ENCODE measurements at regions of chr6 and their contacts with region 1.

Region 1: GRCh38 chr6:154267508-154268106 is 89.0 kb downstream of the IPCEF1 start:
- DNase-seq: peak in 4 of 9 donors; percentile 28 to 48 (median 42)
- ATAC-seq: peak; percentile 38
- H3K4me3 ChIP-seq: no peak overlapping the region
- H3K4me3 Mint-ChIP-seq: peak overlapping the region; percentile 6 to 85 (median 68)
- H3K27ac ChIP-seq: no peak overlapping the region
- H3K27ac Mint-ChIP-seq: peak overlapping the region in 8 of 9 donors; percentile 65 to 92 (median 84)
- H3K4me1 ChIP-seq: peaks cover 0 to 11% of the 10 kb centered on the region in 2 donors
- H3K4me1 Mint-ChIP-seq: peaks cover 14 to 45% (median 33%) of the 10 kb centered on the region in 7 donors
- H3K27me3 ChIP-seq: no peaks in the 10 kb centered on the region
- H3K27me3 Mint-ChIP-seq: peaks cover 0 to 9% (median 0%) of the 10 kb centered on the region in 5 donors

Region 2: DNA sequence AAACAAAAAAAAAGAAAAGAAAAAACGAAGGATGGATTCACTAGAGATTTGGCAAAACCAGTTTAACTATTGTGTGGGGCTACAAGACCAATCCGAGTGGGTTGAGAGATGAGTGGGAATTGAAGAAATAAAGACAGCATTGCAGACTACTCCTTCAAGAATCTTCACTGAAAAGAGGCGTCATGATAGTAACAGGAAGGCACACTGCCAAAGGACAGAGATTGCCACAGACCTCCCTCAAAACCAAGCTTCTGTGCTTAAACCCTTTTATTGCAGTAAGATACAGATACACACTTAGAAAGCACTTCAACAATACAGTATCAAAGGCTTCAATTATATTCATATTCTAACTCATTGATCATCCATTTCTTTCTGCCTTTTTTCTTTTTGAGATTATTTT is 14.9 kb before region 1 on chr6:
- CTCF ChIA-PET with region 1: interaction called, 3 read pairs
- POLR2A ChIA-PET with region 1: interaction called, 49 read pairs
- intact Hi-C with region 1: loop called (anchors 1 to 2 kb)
- DNase-seq: peak in 2 of 9 donors; percentile 38
- ATAC-seq: no peak
- H3K4me3 ChIP-seq: no peak overlapping the region
- H3K4me3 Mint-ChIP-seq: peak overlapping the region in 9 of 10 donors; percentile 35 to 87 (median 69)
- H3K27ac ChIP-seq: peak overlapping the region; percentile 22
- H3K27ac Mint-ChIP-seq: peak overlapping the region in 8 of 9 donors; percentile 90 to 98 (median 96)
- H3K4me1 ChIP-seq: peaks cover 35 to 51% of the 10 kb centered on the region in 2 donors
- H3K4me1 Mint-ChIP-seq: peaks cover 49 to 93% (median 83%) of the 10 kb centered on the region in 7 donors
- H3K27me3 ChIP-seq: no peaks in the 10 kb centered on the region
- H3K27me3 Mint-ChIP-seq: peaks cover 0 to 27% (median 0%) of the 10 kb centered on the region in 5 donors

Region 3: DNA sequence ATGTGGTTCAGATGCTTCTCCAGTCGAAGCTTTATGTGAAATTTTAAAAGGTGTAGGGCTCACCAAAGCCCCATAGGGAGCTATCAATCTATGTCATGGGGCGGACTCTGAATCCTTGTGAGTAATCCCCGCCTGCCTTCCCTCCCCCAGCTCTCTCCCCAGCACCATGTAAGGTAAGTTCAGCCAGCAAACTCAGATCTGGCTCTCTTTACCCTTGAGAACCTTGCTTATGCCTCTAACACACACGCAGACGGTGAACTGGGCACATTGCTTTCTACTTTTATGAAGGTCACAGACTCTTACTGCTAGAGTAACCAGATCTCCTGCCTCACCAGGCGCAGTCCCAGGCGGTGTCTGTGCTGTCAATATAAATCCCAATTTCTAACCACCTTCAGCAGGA is 325.5 kb after region 1 on chr6:
- CTCF ChIA-PET with region 1: no interaction called
- POLR2A ChIA-PET with region 1: no interaction called
- intact Hi-C with region 1: no loop called
- DNase-seq: no peak
- ATAC-seq: no peak
- H3K4me3 ChIP-seq: no peak overlapping the region
- H3K4me3 Mint-ChIP-seq: no peak overlapping the region
- H3K27ac ChIP-seq: no peak overlapping the region
- H3K27ac Mint-ChIP-seq: no peak overlapping the region
- H3K4me1 ChIP-seq: no peaks in the 10 kb centered on the region
- H3K4me1 Mint-ChIP-seq: no peaks in the 10 kb centered on the region
- H3K27me3 ChIP-seq: no peaks in the 10 kb centered on the region
- H3K27me3 Mint-ChIP-seq: no peaks in the 10 kb centered on the region